B cell (primary cell): ENCODE measurements at regions of chr4 and their contacts with region 1.

Region 1: GRCh38 chr4:1746265-1746691 is 25.0 kb downstream of the TACC3 start:
- DNase-seq: peak; percentile 85
- ATAC-seq: peak; percentile 87
- H3K4me3 ChIP-seq: no peak overlapping the region
- H3K4me3 Mint-ChIP-seq: no peak overlapping the region
- H3K27ac ChIP-seq: no peak overlapping the region
- H3K27ac Mint-ChIP-seq: no peak overlapping the region
- H3K4me1 ChIP-seq: peaks cover 3 to 10% of the 10 kb centered on the region in 2 donors
- H3K4me1 Mint-ChIP-seq: peaks cover 2% of the 10 kb centered on the region
- H3K27me3 ChIP-seq: peaks cover 0 to 7% (median 0%) of the 10 kb centered on the region in 4 experiments
- H3K27me3 Mint-ChIP-seq: no peaks in the 10 kb centered on the region
- CTCF ChIP-seq: peak; percentile 89

Region 2: DNA sequence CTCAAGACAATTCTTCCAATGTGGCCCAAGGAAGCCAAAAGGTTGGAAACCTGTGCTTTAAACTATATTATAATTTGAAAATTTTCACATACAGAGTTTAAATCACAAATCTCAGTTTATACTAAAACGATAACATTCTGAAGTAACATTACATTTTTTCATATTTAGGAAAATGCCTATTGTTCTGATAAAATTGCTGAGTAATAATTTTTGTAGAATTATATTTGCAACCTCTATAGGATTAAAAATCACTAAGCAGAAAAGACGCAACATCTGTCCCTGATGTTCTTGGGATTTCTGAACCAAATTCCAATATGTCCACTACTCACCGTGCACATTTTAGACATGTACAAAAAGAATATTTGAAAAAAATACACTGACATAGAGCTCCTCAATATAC is 1451.5 kb before region 1 on chr4:
- CTCF ChIA-PET with region 1: no interaction called
- POLR2A ChIA-PET with region 1: no interaction called
- intact Hi-C with region 1: no loop called
- DNase-seq: no peak
- ATAC-seq: no peak
- H3K4me3 ChIP-seq: no peak overlapping the region
- H3K4me3 Mint-ChIP-seq: no peak overlapping the region
- H3K27ac ChIP-seq: no peak overlapping the region
- H3K27ac Mint-ChIP-seq: no peak overlapping the region
- H3K4me1 ChIP-seq: no peaks in the 10 kb centered on the region
- H3K4me1 Mint-ChIP-seq: no peaks in the 10 kb centered on the region
- H3K27me3 ChIP-seq: no peaks in the 10 kb centered on the region
- H3K27me3 Mint-ChIP-seq: no peaks in the 10 kb centered on the region
- CTCF ChIP-seq: no peak

Region 3: GRCh38 chr4:1809754-1810511 is 63.7 kb after region 1 on chr4:
- CTCF ChIA-PET with region 1: interaction called, 73 read pairs
- POLR2A ChIA-PET with region 1: no interaction called
- intact Hi-C with region 1: no loop called
- DNase-seq: peak; percentile 74
- ATAC-seq: peak; percentile 60
- H3K4me3 ChIP-seq: no peak overlapping the region
- H3K4me3 Mint-ChIP-seq: no peak overlapping the region
- H3K27ac ChIP-seq: no peak overlapping the region
- H3K27ac Mint-ChIP-seq: no peak overlapping the region
- H3K4me1 ChIP-seq: no peaks in the 10 kb centered on the region
- H3K4me1 Mint-ChIP-seq: no peaks in the 10 kb centered on the region
- H3K27me3 ChIP-seq: no peaks in the 10 kb centered on the region
- H3K27me3 Mint-ChIP-seq: no peaks in the 10 kb centered on the region
- CTCF ChIP-seq: peak; percentile 83

Region 4: GRCh38 chr4:1910643-1911042 is 164.4 kb after region 1 on chr4:
- CTCF ChIA-PET with region 1: interaction called, 14 read pairs
- POLR2A ChIA-PET with region 1: no interaction called
- intact Hi-C with region 1: no loop called
- DNase-seq: peak; percentile 22
- ATAC-seq: no peak
- H3K4me3 ChIP-seq: no peak overlapping the region
- H3K4me3 Mint-ChIP-seq: no peak overlapping the region
- H3K27ac ChIP-seq: no peak overlapping the region
- H3K27ac Mint-ChIP-seq: no peak overlapping the region
- H3K4me1 ChIP-seq: no peaks in the 10 kb centered on the region
- H3K4me1 Mint-ChIP-seq: peaks cover 2% of the 10 kb centered on the region
- H3K27me3 ChIP-seq: no peaks in the 10 kb centered on the region
- H3K27me3 Mint-ChIP-seq: no peaks in the 10 kb centered on the region
- CTCF ChIP-seq: peak; percentile 15